AG04449 (cell line): ENCODE measurements at regions of chr1 and their contacts with region 1.

Region 1: GRCh38 chr1:33472349-33472980 is at the start of gene ZSCAN20:
- DNase-seq: peak; percentile 88
- H3K4me3 ChIP-seq: peak within 1 kb of the TSS; percentile 91
- CTCF ChIP-seq: no peak

Region 2: GRCh38 chr1:33094971-33095604 is 377.4 kb before region 1 on chr1:
- CTCF ChIA-PET with region 1: interaction called, 17 read pairs
- POLR2A ChIA-PET with region 1: no interaction called
- DNase-seq: no peak
- H3K4me3 ChIP-seq: no peak overlapping the region
- CTCF ChIP-seq: peak; percentile 83

Region 3: DNA sequence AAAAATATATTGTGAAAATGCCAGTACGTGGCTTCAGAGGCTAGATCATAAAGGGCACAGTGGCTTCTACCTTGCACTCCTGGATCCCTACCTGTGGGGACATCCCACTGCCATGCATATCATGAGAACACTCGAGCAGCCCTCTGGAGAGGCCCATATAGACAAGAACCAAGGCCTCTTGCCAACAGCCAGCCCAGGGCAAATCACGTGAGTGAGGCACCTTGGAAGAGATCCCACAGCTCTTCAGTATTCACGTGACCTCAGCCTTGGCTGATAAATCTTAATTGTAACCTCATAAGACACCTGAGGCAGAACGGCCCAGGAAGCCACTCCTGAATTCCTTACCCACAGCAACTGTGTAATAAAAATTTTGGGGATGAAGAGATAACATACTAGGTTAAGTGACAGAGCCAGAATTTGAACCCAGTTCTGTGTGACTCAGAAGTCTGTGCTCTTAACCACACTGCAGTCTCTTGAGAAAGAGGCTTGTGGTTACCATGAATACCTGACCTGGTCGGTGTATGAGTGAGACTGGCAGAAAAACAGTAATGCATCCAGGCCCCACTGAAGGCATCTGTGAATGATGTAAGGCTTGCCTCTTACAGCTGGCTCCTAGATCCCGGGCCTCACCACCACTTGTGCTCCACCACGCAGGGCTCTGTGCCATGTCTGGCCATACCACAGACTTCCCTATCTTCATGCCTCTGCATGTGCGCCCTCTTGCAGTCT is 144.7 kb before region 1 on chr1:
- CTCF ChIA-PET with region 1: interaction called, 17 read pairs
- POLR2A ChIA-PET with region 1: no interaction called
- DNase-seq: peak; percentile 96
- H3K4me3 ChIP-seq: no peak overlapping the region
- CTCF ChIP-seq: no peak

Region 4: DNA sequence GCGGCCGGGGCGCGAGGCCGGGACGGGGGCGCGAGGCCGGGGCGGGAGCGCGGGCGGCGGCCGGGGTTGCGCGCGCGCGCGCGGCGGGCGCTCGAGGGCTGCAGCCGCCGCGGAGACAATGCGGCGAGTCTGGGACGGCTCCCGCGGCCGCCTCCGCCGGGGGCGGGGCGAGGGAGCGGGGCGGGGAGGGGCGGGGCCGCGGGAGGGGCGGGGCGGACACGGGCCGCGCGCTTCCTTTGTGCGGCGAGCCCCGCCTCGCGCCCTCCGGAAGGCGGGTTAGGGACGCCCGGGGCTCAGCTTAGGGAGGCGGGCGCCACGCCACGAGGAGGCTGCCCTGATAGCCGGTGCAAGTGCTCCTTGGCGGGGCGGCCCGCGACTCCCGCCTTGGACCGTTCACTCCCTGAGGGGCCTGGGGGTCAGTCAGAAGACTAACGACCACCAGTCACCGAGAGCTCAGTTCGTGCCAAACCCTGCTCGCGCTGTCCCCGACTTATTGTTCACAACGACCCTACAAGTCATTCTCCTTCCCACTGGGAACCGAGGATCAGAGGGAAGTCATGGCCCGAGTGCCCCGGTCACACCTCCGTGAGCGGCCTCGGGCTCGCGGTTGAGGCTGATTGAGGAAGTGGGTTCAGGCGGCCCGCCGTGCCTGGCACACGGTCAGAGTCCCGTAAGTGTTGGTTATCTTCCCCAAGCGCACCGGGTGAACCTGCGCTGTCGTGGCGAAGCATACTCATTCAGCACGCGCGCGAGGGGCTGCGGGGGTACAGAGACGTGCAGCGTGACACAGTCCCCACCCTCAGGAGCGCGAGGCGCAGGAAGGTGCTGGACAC is 122.5 kb before region 1 on chr1:
- CTCF ChIA-PET with region 1: interaction called, 11 read pairs
- POLR2A ChIA-PET with region 1: interaction called, 3 read pairs
- DNase-seq: no peak
- H3K4me3 ChIP-seq: peak overlapping the region; percentile 77
- CTCF ChIP-seq: no peak

Region 5: GRCh38 chr1:33367485-33368405 is 104.7 kb before region 1 on chr1:
- CTCF ChIA-PET with region 1: interaction called, 118 read pairs
- POLR2A ChIA-PET with region 1: interaction called, 3 read pairs
- DNase-seq: no peak
- H3K4me3 ChIP-seq: no peak overlapping the region
- CTCF ChIP-seq: peak; percentile 97

Region 6: DNA sequence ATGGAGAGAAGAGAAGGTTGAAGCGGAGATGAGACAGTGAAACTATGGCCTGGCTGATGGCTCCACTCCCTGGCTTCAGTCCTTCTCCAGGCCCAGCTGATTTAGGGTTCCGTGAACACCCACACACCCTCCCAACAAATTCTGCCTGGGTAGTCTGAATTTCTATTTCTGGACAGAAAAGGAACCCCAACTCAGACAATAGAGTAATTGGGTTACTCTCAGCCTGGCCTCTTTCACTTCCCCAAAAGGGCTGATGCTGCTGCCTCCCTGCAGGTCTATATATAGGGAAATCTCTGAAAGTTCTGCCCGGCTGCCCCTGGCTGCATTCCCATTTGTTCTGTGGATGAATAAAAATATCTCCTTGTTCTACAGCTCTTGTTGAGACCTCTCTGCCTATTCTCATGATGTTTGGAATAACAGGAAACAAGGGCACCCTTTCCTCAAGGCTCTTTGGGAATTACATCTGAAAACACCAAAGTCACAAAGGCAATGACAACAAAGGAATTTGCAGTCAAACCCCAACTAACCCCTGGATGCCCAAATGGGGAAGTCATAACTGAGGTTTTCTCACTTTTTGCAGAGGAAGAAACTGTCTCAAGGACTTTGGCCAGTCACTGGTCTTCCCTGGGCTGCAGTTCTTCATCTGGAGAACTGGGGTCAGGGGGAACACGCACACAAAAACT is 11.4 kb before region 1 on chr1:
- CTCF ChIA-PET with region 1: interaction called, 61 read pairs
- POLR2A ChIA-PET with region 1: interaction called, 3 read pairs
- DNase-seq: no peak
- H3K4me3 ChIP-seq: no peak overlapping the region
- CTCF ChIP-seq: no peak

Region 7: GRCh38 chr1:33616773-33617172 is 144.3 kb after region 1 on chr1:
- CTCF ChIA-PET with region 1: interaction called, 26 read pairs
- POLR2A ChIA-PET with region 1: interaction called, 3 read pairs
- DNase-seq: no peak
- H3K4me3 ChIP-seq: no peak overlapping the region
- CTCF ChIP-seq: no peak